Activated B cell treated with CpG ODN at 0.5 μM for 24 hours (primary cell): ENCODE measurements at regions of chr13 and their contacts with region 1.

Region 1: GRCh38 chr13:107407074-107407473 is 808.3 kb downstream of the LIG4 start:
- DNase-seq: no peak
- ATAC-seq: no peak
- H3K4me3 Mint-ChIP-seq: no peak overlapping the region
- H3K27ac Mint-ChIP-seq: no peak overlapping the region
- H3K4me1 Mint-ChIP-seq: no peaks in the 10 kb centered on the region
- H3K27me3 Mint-ChIP-seq: no peaks in the 10 kb centered on the region
- CTCF ChIP-seq: no peak

Region 2: GRCh38 chr13:106678646-106679418 is 728.2 kb before region 1 on chr13:
- CTCF ChIA-PET with region 1: no interaction called
- POLR2A ChIA-PET with region 1: no interaction called
- intact Hi-C with region 1: no loop called
- DNase-seq: no peak
- ATAC-seq: no peak
- H3K4me3 Mint-ChIP-seq: no peak overlapping the region
- H3K27ac Mint-ChIP-seq: no peak overlapping the region
- H3K4me1 Mint-ChIP-seq: peaks cover 6% of the 10 kb centered on the region
- H3K27me3 Mint-ChIP-seq: peaks cover 1% of the 10 kb centered on the region
- CTCF ChIP-seq: no peak

Region 3: GRCh38 chr13:107387525-107387924 is 19.5 kb before region 1 on chr13:
- CTCF ChIA-PET with region 1: no interaction called
- POLR2A ChIA-PET with region 1: no interaction called
- intact Hi-C with region 1: no loop called
- DNase-seq: no peak
- ATAC-seq: no peak
- H3K4me3 Mint-ChIP-seq: no peak overlapping the region
- H3K27ac Mint-ChIP-seq: no peak overlapping the region
- H3K4me1 Mint-ChIP-seq: no peaks in the 10 kb centered on the region
- H3K27me3 Mint-ChIP-seq: no peaks in the 10 kb centered on the region
- CTCF ChIP-seq: no peak

Region 4: DNA sequence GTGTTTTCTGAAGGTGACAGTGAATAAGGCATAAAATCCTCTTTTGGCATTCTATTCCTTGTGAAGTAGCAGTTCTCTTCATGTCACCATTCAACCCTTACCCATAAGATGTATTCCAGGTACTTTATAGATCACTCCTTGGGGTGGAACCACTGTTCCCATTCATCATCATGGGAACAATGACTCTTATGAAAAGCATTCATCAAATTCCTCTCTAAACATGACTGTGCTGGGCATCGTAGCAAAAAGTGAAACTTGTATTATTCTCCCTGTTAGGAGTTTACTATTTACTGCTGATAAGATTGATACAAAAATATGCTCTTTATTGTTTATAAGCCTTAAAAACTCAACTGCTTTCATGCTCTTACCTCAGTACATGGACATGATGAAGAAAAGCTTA is 14.9 kb after region 1 on chr13:
- CTCF ChIA-PET with region 1: no interaction called
- POLR2A ChIA-PET with region 1: no interaction called
- intact Hi-C with region 1: loop called (anchors 2 kb)
- DNase-seq: no peak
- ATAC-seq: no peak
- H3K4me3 Mint-ChIP-seq: no peak overlapping the region
- H3K27ac Mint-ChIP-seq: no peak overlapping the region
- H3K4me1 Mint-ChIP-seq: no peaks in the 10 kb centered on the region
- H3K27me3 Mint-ChIP-seq: no peaks in the 10 kb centered on the region
- CTCF ChIP-seq: no peak